OCI-LY7 (cell line): ENCODE measurements at regions of chr4 and their contacts with region 1.

Region 1: DNA sequence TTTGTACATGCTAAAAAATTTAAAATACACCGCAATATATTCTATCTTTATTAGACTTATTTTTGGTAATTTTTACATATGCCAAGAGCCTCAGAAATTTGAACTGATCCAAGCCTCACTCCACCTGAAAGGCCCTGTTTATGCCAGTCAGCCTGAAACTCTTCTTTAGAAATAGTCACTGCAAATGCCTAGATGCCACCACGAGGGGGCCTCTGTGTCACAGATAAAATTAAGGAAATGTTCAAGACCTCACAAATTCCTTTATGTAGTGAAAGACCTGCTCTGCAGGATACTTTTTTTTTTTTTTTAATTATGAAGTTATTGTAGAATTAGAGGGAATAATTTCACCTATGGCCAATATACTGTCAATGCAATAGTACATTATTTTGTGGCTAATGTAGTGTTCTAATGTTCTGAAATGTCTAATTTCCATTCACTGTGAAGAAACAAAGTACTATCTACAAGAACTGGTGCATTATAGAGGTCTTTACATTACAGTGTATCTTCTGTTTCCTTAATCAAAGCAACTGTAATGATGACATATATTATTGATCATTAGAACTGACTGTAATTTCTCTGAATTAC is 69.8 kb downstream of the DTHD1 start:
- DNase-seq: peak; percentile 58
- H3K4me3 ChIP-seq: no peak overlapping the region
- H3K27ac ChIP-seq: no peak overlapping the region
- H3K4me1 ChIP-seq: no peaks in the 10 kb centered on the region
- CTCF ChIP-seq: peak; percentile 88

Region 2: GRCh38 chr4:36399762-36400353 is 48.7 kb after region 1 on chr4:
- CTCF ChIA-PET with region 1: no interaction called
- POLR2A ChIA-PET with region 1: interaction called, 3 read pairs
- intact Hi-C with region 1: loop called (anchors 2 kb)
- DNase-seq: peak; percentile 15
- H3K4me3 ChIP-seq: no peak overlapping the region
- H3K27ac ChIP-seq: no peak overlapping the region
- H3K4me1 ChIP-seq: no peaks in the 10 kb centered on the region
- CTCF ChIP-seq: peak; percentile 91

Region 3: DNA sequence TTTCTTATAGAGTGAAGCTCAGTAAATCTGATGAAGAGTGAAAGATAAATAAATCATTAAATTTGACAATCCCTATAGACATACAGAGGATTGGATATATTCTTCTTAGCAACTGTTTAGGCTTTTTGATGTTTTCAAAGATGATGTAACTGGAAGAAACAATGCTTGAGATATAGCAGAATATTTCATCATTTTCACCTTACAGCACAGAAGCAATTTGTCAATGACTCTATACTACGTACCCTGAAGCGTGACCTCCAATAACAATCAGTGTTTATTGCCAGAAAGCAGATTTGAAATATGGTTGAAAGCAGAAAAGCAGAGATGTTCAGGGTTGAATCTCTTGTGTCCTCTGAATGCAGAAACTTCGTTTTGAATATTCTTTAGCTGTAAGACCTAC is 158.7 kb after region 1 on chr4:
- CTCF ChIA-PET with region 1: no interaction called
- POLR2A ChIA-PET with region 1: no interaction called
- intact Hi-C with region 1: no loop called
- DNase-seq: no peak
- H3K4me3 ChIP-seq: no peak overlapping the region
- H3K27ac ChIP-seq: no peak overlapping the region
- H3K4me1 ChIP-seq: no peaks in the 10 kb centered on the region
- CTCF ChIP-seq: no peak